Naive thymus-derived CD4-positive, alpha-beta T cell (primary cell): ENCODE measurements at regions of chr10 and their contacts with region 1.

Region 1: GRCh38 chr10:103888113-103888841 is 29.7 kb downstream of the STN1 start:
- DNase-seq: peak in 7 of 9 donors; percentile 36 to 72 (median 59)
- ATAC-seq: peak; percentile 90
- H3K4me3 ChIP-seq: no peak overlapping the region
- H3K4me3 Mint-ChIP-seq: no peak overlapping the region
- H3K27ac ChIP-seq: no peak overlapping the region
- H3K27ac Mint-ChIP-seq: peak overlapping the region in 8 of 9 donors; percentile 5 to 83 (median 38)
- H3K4me1 ChIP-seq: peaks cover 4 to 5% of the 10 kb centered on the region in 2 donors
- H3K4me1 Mint-ChIP-seq: peaks cover 6 to 33% (median 20%) of the 10 kb centered on the region in 7 donors
- H3K27me3 ChIP-seq: no peaks in the 10 kb centered on the region
- H3K27me3 Mint-ChIP-seq: no peaks in the 10 kb centered on the region

Region 2: DNA sequence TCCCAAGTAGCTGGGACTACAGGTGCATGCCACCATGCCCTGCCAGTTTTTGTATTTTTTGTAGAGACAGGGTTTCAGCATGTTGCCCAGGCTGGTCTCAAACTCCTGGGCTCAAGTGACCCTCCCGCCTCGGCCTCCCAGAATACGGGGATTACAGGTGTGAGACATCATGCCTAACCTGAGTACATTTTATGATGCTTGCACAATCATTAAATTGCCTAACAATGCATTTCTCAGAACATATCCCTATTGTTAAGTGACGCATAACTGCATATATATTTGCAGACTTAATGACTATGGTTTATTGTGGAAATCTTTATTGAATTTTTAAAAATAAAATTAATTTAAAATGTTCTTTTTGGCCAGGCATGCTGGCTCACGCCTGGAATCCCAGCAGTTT is 580.7 kb before region 1 on chr10:
- CTCF ChIA-PET with region 1: no interaction called
- POLR2A ChIA-PET with region 1: no interaction called
- intact Hi-C with region 1: no loop called
- DNase-seq: no peak
- ATAC-seq: no peak
- H3K4me3 ChIP-seq: no peak overlapping the region
- H3K4me3 Mint-ChIP-seq: no peak overlapping the region
- H3K27ac ChIP-seq: no peak overlapping the region
- H3K27ac Mint-ChIP-seq: no peak overlapping the region
- H3K4me1 ChIP-seq: no peaks in the 10 kb centered on the region
- H3K4me1 Mint-ChIP-seq: no peaks in the 10 kb centered on the region
- H3K27me3 ChIP-seq: no peaks in the 10 kb centered on the region
- H3K27me3 Mint-ChIP-seq: no peaks in the 10 kb centered on the region

Region 3: DNA sequence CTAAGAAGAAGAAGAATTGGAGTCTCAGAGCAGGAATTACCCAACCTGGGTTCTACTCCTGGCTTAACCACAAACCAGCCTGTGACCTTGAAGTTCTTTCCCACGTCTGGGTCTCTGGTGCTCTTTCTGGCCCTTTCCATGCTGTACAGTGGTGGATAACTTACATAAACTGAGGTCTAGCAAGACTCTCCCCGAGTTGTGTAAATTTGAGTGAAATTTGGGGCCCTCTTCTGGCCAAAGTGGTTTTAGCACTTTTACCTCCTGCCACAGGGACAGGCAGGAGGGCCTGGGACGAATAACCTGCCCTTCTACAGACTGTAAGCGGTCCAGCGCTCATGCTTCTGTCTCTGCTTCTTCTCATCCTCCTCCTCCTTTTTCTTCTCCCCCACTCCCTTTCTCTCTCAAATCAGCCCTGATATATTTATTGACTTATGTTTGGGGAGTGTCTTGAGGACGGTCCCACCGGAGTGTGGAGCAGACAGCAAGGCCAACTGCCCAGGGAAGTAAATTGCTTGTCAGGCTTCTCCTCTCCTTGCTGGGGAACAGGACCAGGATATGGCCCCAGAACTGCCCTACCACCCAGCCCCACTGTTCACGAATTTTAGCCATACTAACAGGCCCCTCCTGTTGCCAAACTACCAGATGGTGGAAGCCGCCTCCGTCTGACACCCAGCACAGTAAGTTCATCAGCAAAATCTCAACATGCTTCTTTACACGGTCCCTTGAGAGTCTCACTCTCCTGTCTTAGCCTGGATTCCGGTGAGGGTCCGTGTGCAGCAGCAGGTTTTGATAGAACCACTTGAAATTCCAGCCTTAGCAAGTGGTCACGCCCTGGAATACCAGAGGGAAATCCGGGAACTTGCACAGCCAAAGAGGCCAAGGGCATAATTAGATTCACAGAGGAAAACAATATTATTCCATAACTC is 28.9 kb before region 1 on chr10:
- CTCF ChIA-PET with region 1: interaction called, 3 read pairs
- POLR2A ChIA-PET with region 1: no interaction called
- intact Hi-C with region 1: loop called in 1 of 2 experiments (anchors 1 kb)
- DNase-seq: peak; percentile 16 to 67 (median 46)
- ATAC-seq: peak; percentile 74
- H3K4me3 ChIP-seq: no peak overlapping the region
- H3K4me3 Mint-ChIP-seq: no peak overlapping the region
- H3K27ac ChIP-seq: no peak overlapping the region
- H3K27ac Mint-ChIP-seq: no peak overlapping the region
- H3K4me1 ChIP-seq: peaks cover 0 to 7% of the 10 kb centered on the region in 2 donors
- H3K4me1 Mint-ChIP-seq: peaks cover 3 to 13% (median 11%) of the 10 kb centered on the region in 7 donors
- H3K27me3 ChIP-seq: peaks cover 3 to 5% of the 10 kb centered on the region in 2 donors
- H3K27me3 Mint-ChIP-seq: peaks cover 12 to 58% (median 16%) of the 10 kb centered on the region in 5 donors

Region 4: DNA sequence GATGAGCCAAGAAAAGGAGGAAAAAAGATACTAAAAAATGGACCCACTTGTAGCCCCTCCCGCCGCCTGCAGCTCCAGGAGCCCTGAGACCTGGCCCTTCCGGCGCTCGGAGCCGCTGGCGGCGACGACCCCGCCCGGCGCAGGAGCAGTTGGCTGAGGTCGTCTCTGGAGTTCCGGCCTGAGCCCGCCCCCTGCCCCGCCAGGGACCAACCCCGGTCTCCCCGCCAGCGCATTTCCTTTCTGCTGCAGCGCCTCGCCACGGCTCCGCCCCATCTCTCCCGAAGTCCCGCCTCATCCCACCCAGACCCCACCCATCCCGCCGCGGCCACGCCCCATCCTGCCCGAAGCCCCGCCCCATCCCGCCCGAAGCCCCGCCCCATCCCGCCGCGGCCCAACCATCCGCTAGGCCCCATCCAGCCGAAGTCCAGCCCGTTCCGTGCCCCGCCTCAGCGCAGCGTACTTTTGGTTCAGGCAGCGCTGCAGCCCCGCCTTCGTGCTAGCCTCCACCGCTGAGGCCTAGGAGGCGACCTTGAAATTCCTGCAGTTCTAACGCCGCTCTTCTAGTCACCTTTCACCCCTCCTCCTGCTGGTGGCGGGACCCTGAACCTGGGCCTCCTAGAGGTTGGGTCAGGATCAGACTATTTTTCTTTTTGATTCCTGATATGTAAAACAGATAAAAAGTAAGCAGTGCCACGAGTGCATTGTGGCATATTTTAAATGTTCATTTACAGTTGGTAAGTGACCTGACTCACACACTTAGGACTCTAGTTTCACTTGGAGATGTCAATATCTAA is 30.0 kb after region 1 on chr10 and contains the start of gene STN1:
- CTCF ChIA-PET with region 1: interaction called, 7 read pairs
- POLR2A ChIA-PET with region 1: interaction called, 10 read pairs
- intact Hi-C with region 1: loop called (anchors 1 kb)
- DNase-seq: peak; percentile 81 to 95 (median 94)
- ATAC-seq: peak; percentile 97
- H3K4me3 ChIP-seq: peak within 1 kb of the TSS; percentile 89
- H3K4me3 Mint-ChIP-seq: peak within 1 kb of the TSS; percentile 88 to 99 (median 97)
- H3K27ac ChIP-seq: peak within 1 kb of the TSS; percentile 79
- H3K27ac Mint-ChIP-seq: peak within 1 kb of the TSS; percentile 95 to 99 (median 97)
- H3K4me1 ChIP-seq: peaks cover 28 to 31% of the 10 kb centered on the region in 2 donors
- H3K4me1 Mint-ChIP-seq: peaks cover 15 to 44% (median 38%) of the 10 kb centered on the region in 7 donors
- H3K27me3 ChIP-seq: no peaks in the 10 kb centered on the region
- H3K27me3 Mint-ChIP-seq: no peaks in the 10 kb centered on the region
- total RNA-seq, gene STN1: 28.8 to 42.6 (median 34.8) TPM

Region 5: GRCh38 chr10:103960103-103960502 is 71.8 kb after region 1 on chr10:
- CTCF ChIA-PET with region 1: no interaction called
- POLR2A ChIA-PET with region 1: no interaction called
- intact Hi-C with region 1: no loop called
- DNase-seq: no peak
- ATAC-seq: no peak
- H3K4me3 ChIP-seq: no peak overlapping the region
- H3K4me3 Mint-ChIP-seq: no peak overlapping the region
- H3K27ac ChIP-seq: no peak overlapping the region
- H3K27ac Mint-ChIP-seq: no peak overlapping the region
- H3K4me1 ChIP-seq: no peaks in the 10 kb centered on the region
- H3K4me1 Mint-ChIP-seq: peaks cover 0 to 5% (median 0%) of the 10 kb centered on the region in 7 donors
- H3K27me3 ChIP-seq: no peaks in the 10 kb centered on the region
- H3K27me3 Mint-ChIP-seq: peaks cover 0 to 40% (median 0%) of the 10 kb centered on the region in 5 donors

Region 6: GRCh38 chr10:104002911-104003310 is 114.6 kb after region 1 on chr10:
- CTCF ChIA-PET with region 1: interaction called, 4 read pairs
- POLR2A ChIA-PET with region 1: no interaction called
- intact Hi-C with region 1: loop called in 1 of 2 experiments (anchors 2 kb)
- DNase-seq: no peak
- ATAC-seq: peak; percentile 40
- H3K4me3 ChIP-seq: no peak overlapping the region
- H3K4me3 Mint-ChIP-seq: no peak overlapping the region
- H3K27ac ChIP-seq: no peak overlapping the region
- H3K27ac Mint-ChIP-seq: peak overlapping the region in 4 of 9 donors; percentile 7 to 35 (median 22)
- H3K4me1 ChIP-seq: no peaks in the 10 kb centered on the region
- H3K4me1 Mint-ChIP-seq: peaks cover 0 to 11% (median 0%) of the 10 kb centered on the region in 7 donors
- H3K27me3 ChIP-seq: no peaks in the 10 kb centered on the region
- H3K27me3 Mint-ChIP-seq: no peaks in the 10 kb centered on the region

Region 7: GRCh38 chr10:104139221-104139620 is 250.9 kb after region 1 on chr10:
- CTCF ChIA-PET with region 1: interaction called, 3 read pairs
- POLR2A ChIA-PET with region 1: no interaction called
- intact Hi-C with region 1: loop called in 1 of 2 experiments (anchors 1 kb)
- DNase-seq: peak in 2 of 9 donors; percentile 8 to 14
- ATAC-seq: peak; percentile 65
- H3K4me3 ChIP-seq: no peak overlapping the region
- H3K4me3 Mint-ChIP-seq: no peak overlapping the region
- H3K27ac ChIP-seq: no peak overlapping the region
- H3K27ac Mint-ChIP-seq: no peak overlapping the region
- H3K4me1 ChIP-seq: no peaks in the 10 kb centered on the region
- H3K4me1 Mint-ChIP-seq: no peaks in the 10 kb centered on the region
- H3K27me3 ChIP-seq: peaks cover 0 to 3% of the 10 kb centered on the region in 2 donors
- H3K27me3 Mint-ChIP-seq: peaks cover 1 to 49% (median 11%) of the 10 kb centered on the region in 5 donors